IMR-90 (cell line): ENCODE measurements at regions of chr3 and their contacts with region 1.

Region 1: DNA sequence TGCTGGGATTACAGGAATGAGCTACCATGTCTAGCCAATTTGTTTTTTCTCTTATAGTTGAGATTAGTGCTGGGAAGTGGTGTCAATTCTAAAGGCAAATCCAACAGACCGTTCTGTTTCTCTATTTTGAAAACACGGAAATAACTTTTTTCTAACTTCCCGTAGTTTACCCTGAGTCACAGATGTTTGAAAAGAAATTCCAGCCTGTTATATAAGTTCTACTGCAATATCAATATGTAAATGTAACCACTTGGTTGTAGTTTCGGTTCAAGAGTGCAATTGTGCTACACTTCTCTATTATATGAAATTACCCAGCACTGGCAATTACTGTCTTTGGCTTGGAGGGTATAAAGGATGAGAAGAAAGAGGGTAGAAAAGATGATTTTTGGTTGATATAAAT is 22.3 kb upstream of the GNB4 start:
- DNase-seq: no peak
- ATAC-seq: no peak
- H3K4me3 ChIP-seq: no peak overlapping the region
- H3K27ac ChIP-seq: no peak overlapping the region
- H3K4me1 ChIP-seq: no peaks in the 10 kb centered on the region
- H3K27me3 ChIP-seq: no peaks in the 10 kb centered on the region
- CTCF ChIP-seq: no peak
- POLR2A ChIP-seq: no peak
- RAD21 ChIP-seq: no peak

Region 2: DNA sequence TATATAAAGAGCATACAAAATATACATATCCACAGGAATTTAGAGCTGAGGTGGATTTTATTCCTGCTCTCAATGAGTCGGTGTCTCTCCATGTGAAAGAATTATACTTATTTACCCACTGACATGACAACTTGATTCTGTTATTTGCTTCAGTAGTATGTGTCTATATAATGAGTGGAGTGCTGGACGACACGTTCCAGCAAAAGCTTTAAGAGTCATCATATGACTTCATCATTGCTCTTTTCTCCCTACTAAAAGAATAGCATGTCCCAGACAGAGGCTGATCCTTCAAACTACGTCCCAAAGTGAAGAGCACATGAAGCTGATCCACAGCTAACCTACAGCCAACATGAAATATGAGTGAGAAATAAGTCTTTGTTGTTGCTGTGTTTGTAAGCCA is 32.0 kb after region 1 on chr3:
- CTCF ChIA-PET with region 1: no interaction called
- POLR2A ChIA-PET with region 1: no interaction called
- dilution Hi-C with region 1: no loop called
- in situ Hi-C with region 1: no loop called
- intact Hi-C with region 1: loop called (anchors 5 kb)
- DNase-seq: no peak
- ATAC-seq: no peak
- H3K4me3 ChIP-seq: no peak overlapping the region
- H3K27ac ChIP-seq: no peak overlapping the region
- H3K4me1 ChIP-seq: no peaks in the 10 kb centered on the region
- H3K27me3 ChIP-seq: peaks cover 6% of the 10 kb centered on the region
- CTCF ChIP-seq: no peak
- POLR2A ChIP-seq: no peak
- RAD21 ChIP-seq: no peak